ENCODE measurements at regions of chr19 and their contacts with region 1.

Region 1: GRCh38 chr19:11924886-11925650 is at the start of gene ZNF700:
- DNase-seq: peak; percentile 86 to 95 (median 89)
- H3K4me3 ChIP-seq: peak within 1 kb of the TSS; percentile 99
- H3K4me3 Mint-ChIP-seq: peak within 1 kb of the TSS; percentile 93 to 98 (median 96)
- H3K27ac ChIP-seq: peak within 1 kb of the TSS; percentile 87
- H3K27ac Mint-ChIP-seq: peak within 1 kb of the TSS; percentile 92 to 98 (median 96)
- H3K4me1 ChIP-seq: peaks cover 31% of the 10 kb centered on the region
- H3K4me1 Mint-ChIP-seq: peaks cover 26 to 58% (median 40%) of the 10 kb centered on the region in 4 donors
- H3K27me3 ChIP-seq: no peaks in the 10 kb centered on the region
- H3K27me3 Mint-ChIP-seq: no peaks in the 10 kb centered on the region
- total RNA-seq, gene ZNF700: 24.9 to 25.6 TPM

Region 2: DNA sequence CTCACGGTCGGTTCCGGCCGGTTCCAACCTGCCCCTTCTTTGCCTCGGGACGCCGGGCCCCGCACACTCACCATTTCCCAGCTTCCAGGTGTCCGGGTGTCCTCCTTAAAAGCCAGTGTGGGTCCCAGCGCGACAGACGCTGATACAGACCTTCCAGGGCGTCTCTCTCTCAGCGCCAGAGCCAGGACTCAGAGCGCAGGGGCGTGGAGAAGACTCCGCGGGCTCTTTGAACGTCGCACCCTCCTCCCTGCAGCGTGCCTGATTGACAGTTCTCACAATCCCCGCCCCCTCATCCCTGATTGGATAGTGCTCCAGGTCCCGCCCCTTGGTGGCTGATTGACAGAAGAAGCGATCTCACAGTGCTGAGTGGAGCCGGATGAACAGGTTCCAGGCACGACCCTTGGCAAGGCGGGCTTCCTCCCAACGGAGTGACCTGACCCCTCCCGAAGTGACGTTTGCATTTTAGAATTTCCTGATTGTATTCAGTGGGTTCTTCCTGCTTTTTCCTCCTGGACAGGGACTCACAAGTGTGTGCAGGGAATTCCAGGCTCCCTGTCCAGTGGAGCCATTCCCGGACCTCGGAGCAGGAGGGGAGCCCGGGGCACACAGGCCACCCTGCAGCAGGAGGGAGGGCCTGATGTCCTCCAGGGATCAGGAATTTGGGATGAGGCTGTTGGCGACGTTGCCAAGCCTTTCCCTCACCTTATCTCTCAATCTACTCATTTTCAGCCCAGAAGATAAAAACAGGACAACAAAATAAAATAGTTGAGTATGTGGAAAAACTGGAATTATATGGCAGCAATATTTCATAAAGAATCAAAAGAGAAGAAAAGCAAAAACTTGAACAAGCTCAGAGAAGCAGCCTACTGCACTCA is 186.1 kb before region 1 on chr19 and contains the start of gene ZNF823:
- CTCF ChIA-PET with region 1: no interaction called
- POLR2A ChIA-PET with region 1: no interaction called
- intact Hi-C with region 1: loop called (anchors 10 kb)
- DNase-seq: peak; percentile 94 to 97 (median 95)
- H3K4me3 ChIP-seq: peak within 1 kb of the TSS; percentile 45 to 80
- H3K4me3 Mint-ChIP-seq: peak within 1 kb of the TSS; percentile 96 to 100 (median 99)
- H3K27ac ChIP-seq: peak within 1 kb of the TSS; percentile 63
- H3K27ac Mint-ChIP-seq: peak within 1 kb of the TSS; percentile 77 to 99 (median 97)
- H3K4me1 ChIP-seq: peaks cover 15% of the 10 kb centered on the region
- H3K4me1 Mint-ChIP-seq: peaks cover 15 to 30% (median 17%) of the 10 kb centered on the region in 4 donors
- H3K27me3 ChIP-seq: no peaks in the 10 kb centered on the region
- H3K27me3 Mint-ChIP-seq: no peaks in the 10 kb centered on the region
- total RNA-seq, gene ZNF823: 4.6 to 5.4 TPM

Region 3: DNA sequence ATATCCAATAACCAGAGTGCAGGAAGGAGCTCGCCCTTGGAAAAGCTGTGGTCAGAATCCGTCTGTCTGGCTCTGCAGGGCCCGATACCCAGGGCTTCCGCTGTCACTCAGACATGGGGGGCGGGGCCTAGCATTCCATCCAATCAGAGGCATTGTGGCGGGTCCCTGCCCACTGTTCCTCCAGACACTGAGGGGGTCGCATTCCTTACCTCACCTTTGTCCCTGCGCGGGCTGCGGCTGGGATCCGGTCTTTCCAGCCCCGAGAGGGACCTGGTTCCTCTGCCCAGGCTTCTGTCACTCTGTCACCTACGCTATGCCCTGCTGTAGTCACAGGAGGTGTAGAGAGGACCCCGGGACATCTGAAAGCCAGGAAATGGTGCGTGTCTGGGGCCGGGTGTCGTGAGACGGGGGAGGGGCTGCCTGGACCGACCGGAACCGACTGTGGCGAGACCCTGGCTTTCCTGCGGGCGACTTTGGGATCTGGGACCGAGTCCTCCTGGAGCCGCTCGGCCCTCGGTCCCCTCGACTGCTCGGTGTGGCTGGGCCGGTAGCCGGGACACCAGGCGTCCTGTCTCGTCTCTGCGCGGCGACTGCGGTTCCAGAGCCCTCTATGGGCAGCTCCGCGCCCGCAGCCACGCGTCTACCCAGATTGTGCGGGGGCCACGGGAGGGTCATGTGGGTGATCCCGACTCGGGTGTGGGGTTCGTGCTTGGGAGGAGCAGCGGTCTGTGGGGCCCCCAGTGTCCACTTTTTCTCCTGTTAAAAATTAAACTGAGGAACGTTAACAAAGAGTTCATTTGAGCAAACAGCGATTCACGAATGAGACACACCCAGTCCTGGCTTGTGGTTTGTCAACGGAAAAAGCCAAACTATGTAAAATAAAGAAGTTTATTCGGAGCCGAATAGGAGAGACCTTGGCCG is 37.2 kb before region 1 on chr19 and contains the start of gene ZNF69:
- CTCF ChIA-PET with region 1: interaction called, 34 read pairs
- POLR2A ChIA-PET with region 1: interaction called, 6 read pairs
- intact Hi-C with region 1: loop called (anchors 2 kb)
- DNase-seq: peak; percentile 38 to 53 (median 43)
- H3K4me3 ChIP-seq: peak within 1 kb of the TSS; percentile 57 to 62
- H3K4me3 Mint-ChIP-seq: peak within 1 kb of the TSS; percentile 91 to 94 (median 92)
- H3K27ac ChIP-seq: peak within 1 kb of the TSS; percentile 50
- H3K27ac Mint-ChIP-seq: peak within 1 kb of the TSS; percentile 68 to 92 (median 88)
- H3K4me1 ChIP-seq: peaks cover 14% of the 10 kb centered on the region
- H3K4me1 Mint-ChIP-seq: peaks cover 13 to 34% (median 19%) of the 10 kb centered on the region in 4 donors
- H3K27me3 ChIP-seq: no peaks in the 10 kb centered on the region
- H3K27me3 Mint-ChIP-seq: no peaks in the 10 kb centered on the region
- total RNA-seq, gene ZNF69: 7.5 to 8.5 TPM

Region 4: GRCh38 chr19:11987405-11988281 is 62.6 kb after region 1 on chr19:
- CTCF ChIA-PET with region 1: interaction called, 177 read pairs
- POLR2A ChIA-PET with region 1: interaction called, 95 read pairs
- intact Hi-C with region 1: loop called (anchors 1 kb)
- DNase-seq: peak; percentile 83 to 92 (median 85)
- H3K4me3 ChIP-seq: peak overlapping the region; percentile 66 to 67
- H3K4me3 Mint-ChIP-seq: peak overlapping the region; percentile 91 to 99 (median 98)
- H3K27ac ChIP-seq: peak overlapping the region; percentile 73
- H3K27ac Mint-ChIP-seq: peak overlapping the region; percentile 95 to 99 (median 97)
- H3K4me1 ChIP-seq: peaks cover 7% of the 10 kb centered on the region
- H3K4me1 Mint-ChIP-seq: peaks cover 15 to 29% (median 18%) of the 10 kb centered on the region in 4 donors
- H3K27me3 ChIP-seq: no peaks in the 10 kb centered on the region
- H3K27me3 Mint-ChIP-seq: no peaks in the 10 kb centered on the region

Region 5: DNA sequence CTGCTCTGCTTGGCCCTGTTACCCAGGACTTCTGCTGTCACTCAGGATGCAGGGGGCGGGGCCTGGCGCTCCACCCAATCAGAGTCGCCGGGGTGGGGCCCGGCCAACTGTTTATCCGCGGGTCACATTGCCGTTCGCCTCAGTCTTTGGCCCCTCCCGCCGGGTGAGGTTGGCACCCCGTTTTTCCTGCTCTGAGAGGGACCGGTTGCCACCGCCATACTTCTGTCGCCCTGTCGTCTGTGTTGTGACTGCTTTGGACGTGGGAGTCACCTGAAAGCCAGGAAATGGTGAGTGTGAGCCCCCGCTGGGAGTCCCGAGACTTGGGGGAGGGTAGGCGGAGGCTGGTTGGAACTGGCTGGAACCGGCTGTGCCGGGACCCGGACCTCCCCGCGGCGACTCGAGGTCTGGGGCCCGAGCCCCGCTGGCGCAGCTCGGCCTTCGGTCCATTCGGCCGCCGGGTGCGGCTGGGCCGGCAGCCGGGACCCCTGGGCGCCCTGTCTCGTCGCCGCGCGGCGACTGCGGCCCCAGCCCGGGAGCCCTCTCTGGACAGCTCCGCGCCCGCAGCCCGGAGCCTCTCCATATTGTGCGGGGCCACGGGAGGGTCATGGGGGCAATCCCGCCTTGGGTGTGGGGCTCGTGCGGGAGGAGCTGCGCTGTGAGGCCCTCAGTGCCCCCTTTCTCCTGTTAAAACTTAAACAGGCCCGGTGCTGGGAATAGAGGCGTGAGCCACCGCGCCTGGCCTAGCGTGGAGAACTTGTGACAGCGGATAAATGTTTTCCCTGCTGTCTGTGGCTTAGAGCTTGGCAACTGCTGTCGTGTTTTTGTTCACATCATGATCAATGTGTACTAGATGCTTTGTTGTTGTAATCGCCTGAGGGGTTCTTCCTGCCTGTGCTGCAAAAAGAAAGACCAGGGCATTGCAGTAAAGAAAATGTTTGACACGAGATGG is 139.8 kb after region 1 on chr19 and contains the start of gene ZNF844:
- CTCF ChIA-PET with region 1: interaction called, 16 read pairs
- POLR2A ChIA-PET with region 1: interaction called, 7 read pairs
- intact Hi-C with region 1: no loop called
- DNase-seq: peak; percentile 48 to 62 (median 56)
- H3K4me3 ChIP-seq: peak within 1 kb of the TSS; percentile 57 to 71
- H3K4me3 Mint-ChIP-seq: peak within 1 kb of the TSS; percentile 83 to 90 (median 86)
- H3K27ac ChIP-seq: peak within 1 kb of the TSS; percentile 11
- H3K27ac Mint-ChIP-seq: peak within 1 kb of the TSS in 6 of 7 donors; percentile 47 to 87 (median 74)
- H3K4me1 ChIP-seq: peaks cover 7% of the 10 kb centered on the region
- H3K4me1 Mint-ChIP-seq: peaks cover 3 to 13% (median 8%) of the 10 kb centered on the region in 4 donors
- H3K27me3 ChIP-seq: no peaks in the 10 kb centered on the region
- H3K27me3 Mint-ChIP-seq: no peaks in the 10 kb centered on the region
- total RNA-seq, gene ZNF844: 8.8 to 9.8 TPM

Measured in CD4-positive, alpha-beta memory T cell (primary cell).